ENCODE measurements at regions of chr4 and their contacts with region 1.

Region 1: DNA sequence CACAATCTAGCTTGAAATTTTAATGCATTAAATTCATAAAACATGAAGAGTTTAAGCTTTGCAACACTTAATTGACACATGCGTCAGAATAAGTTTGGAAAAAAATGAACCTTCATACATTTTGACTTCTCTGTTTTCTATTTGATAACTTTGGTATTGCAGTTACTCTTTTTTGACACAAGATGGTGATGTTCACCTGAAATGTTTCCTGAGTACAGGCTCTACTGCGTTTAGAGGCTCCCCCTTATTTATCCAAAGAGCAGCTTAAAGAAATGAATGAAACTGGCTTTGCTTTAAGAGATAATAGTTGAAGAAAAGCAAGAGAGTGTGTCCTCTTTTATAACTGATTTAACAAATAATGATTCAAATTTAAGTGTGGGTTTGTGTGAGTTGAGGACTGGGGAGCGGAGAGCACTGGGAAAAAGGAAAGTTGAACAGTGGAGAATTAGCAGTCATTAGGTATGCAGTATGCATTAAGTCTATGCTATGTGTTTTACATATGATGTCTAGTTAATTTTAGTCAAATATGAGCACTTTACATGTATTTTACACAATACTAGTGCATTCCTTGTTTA is 180.6 kb upstream of the NUDT6 start:
- DNase-seq: no peak
- ATAC-seq: peak in 1 of 2 donors; percentile 78
- H3K4me3 ChIP-seq: no peak overlapping the region
- H3K27ac ChIP-seq: no peak overlapping the region
- H3K4me1 ChIP-seq: peaks cover 0 to 3% of the 10 kb centered on the region in 2 donors
- H3K27me3 ChIP-seq: no peaks in the 10 kb centered on the region
- CTCF ChIP-seq: peak; percentile 47 to 75 (median 67)
- POLR2A ChIP-seq: no peak

Region 2: GRCh38 chr4:122827879-122828601 is 274.9 kb before region 1 on chr4:
- in situ Hi-C with region 1: no loop called
- intact Hi-C with region 1: no loop called
- DNase-seq: no peak
- ATAC-seq: peak in 1 of 2 donors; percentile 50
- H3K4me3 ChIP-seq: peak overlapping the region; percentile 68 to 78 (median 71)
- H3K27ac ChIP-seq: peak overlapping the region; percentile 61 to 76 (median 72)
- H3K4me1 ChIP-seq: peaks cover 5 to 8% of the 10 kb centered on the region in 2 donors
- H3K27me3 ChIP-seq: peaks cover 22 to 35% (median 31%) of the 10 kb centered on the region in 3 donors
- CTCF ChIP-seq: no peak
- POLR2A ChIP-seq: no peak

Region 3: GRCh38 chr4:123418351-123418931 is 315.5 kb after region 1 on chr4:
- in situ Hi-C with region 1: no loop called
- intact Hi-C with region 1: no loop called
- DNase-seq: peak; percentile 22 to 48
- ATAC-seq: peak; percentile 92 to 96
- H3K4me3 ChIP-seq: peak overlapping the region in 1 of 4 donors; percentile 20
- H3K27ac ChIP-seq: peak overlapping the region; percentile 56 to 79 (median 78)
- H3K4me1 ChIP-seq: peaks cover 23 to 25% of the 10 kb centered on the region in 2 donors
- H3K27me3 ChIP-seq: no peaks in the 10 kb centered on the region
- CTCF ChIP-seq: no peak
- POLR2A ChIP-seq: no peak

Region 4: DNA sequence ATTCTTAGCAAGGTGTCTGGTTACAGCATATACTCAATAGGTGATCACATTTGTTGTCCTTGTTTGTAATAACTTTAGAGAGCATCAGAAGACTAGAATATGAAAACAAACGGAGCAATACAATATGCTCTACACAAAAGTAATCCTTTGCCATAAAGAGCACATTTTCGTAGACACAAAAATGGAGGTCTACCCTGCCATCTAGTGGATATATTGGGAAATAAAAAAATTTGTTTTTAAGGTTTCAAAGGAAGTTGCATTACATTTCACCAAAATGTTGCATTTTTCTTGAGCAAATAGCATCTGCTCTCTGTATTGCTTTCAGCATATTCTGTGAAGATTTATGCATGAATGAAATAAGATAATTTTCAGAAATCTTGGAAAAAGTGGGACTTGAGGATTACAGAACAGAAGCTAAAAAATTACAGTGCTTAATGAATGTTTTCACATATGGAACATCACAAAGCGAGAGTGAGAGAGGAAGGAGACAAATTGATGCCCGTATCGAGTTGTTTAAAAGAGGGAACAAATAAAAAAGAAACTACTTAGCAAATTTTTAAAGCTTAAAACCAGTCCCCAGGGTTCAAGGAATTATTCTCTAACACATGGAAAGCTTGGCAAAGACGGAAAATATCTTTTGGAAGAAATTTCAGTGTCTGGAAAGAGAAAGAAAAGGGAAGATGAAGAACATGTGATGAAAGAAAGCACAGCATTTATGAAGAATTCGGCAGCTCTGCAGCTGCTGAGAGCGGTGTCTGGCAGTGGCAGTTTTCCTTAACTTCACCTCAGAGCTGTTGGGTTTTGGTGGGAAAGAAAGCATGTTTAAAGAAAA is 1219.5 kb after region 1 on chr4:
- in situ Hi-C with region 1: no loop called
- intact Hi-C with region 1: loop called (anchors 5 kb)
- DNase-seq: no peak
- ATAC-seq: no peak
- H3K4me3 ChIP-seq: no peak overlapping the region
- H3K27ac ChIP-seq: no peak overlapping the region
- H3K4me1 ChIP-seq: peaks cover 0 to 6% of the 10 kb centered on the region in 2 donors
- H3K27me3 ChIP-seq: no peaks in the 10 kb centered on the region
- CTCF ChIP-seq: peak; percentile 14 to 58 (median 35)
- POLR2A ChIP-seq: no peak